ENCODE measurements at regions of chr6 and their contacts with region 1.

Region 1: DNA sequence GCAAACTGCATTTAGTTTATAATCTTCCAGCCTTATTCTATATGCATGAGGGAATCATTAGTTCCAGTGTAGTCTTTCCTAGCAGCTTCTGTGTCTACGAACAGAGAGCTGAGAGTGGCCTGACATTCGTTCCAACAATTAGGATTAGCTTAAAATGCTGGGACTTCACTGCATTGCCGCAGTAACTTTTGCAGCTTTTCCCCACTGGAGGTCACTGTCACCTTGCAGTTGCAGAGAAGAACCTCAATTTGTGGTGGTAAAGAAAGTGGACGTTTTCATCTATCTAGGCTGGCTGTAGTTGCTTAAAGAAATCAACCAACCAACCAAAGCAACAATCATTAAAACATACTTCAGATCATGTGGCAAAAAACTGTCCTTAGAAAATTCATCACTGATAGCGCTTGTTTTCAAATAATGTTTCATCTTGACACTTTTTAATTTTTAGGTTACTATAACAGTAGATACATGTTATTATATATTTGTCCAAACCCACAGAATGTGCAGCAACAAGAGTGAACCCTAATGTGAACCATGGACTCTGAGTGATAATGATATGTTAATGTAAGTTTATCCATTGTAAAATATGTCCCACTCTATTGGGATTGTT is 12.2 kb downstream of the MYLK4 start:
- DNase-seq: peak; percentile 58 to 73
- H3K4me3 ChIP-seq: no peak overlapping the region
- H3K4me3 Mint-ChIP-seq: no peak overlapping the region
- H3K27ac Mint-ChIP-seq: no peak overlapping the region
- H3K4me1 ChIP-seq: peaks cover 10% of the 10 kb centered on the region
- H3K4me1 Mint-ChIP-seq: peaks cover 3% of the 10 kb centered on the region
- H3K27me3 ChIP-seq: no peaks in the 10 kb centered on the region
- H3K27me3 Mint-ChIP-seq: no peaks in the 10 kb centered on the region
- CTCF ChIP-seq: peak; percentile 57 to 85

Region 2: GRCh38 chr6:2749969-2750600 is 11.6 kb after region 1 on chr6:
- CTCF ChIA-PET with region 1: interaction called, 21 read pairs
- POLR2A ChIA-PET with region 1: no interaction called
- intact Hi-C with region 1: loop called (anchors 1 kb)
- DNase-seq: peak; percentile 43 to 71
- H3K4me3 ChIP-seq: no peak overlapping the region
- H3K4me3 Mint-ChIP-seq: no peak overlapping the region
- H3K27ac Mint-ChIP-seq: no peak overlapping the region
- H3K4me1 ChIP-seq: peaks cover 4% of the 10 kb centered on the region
- H3K4me1 Mint-ChIP-seq: peaks cover under 1% of the 10 kb centered on the region
- H3K27me3 ChIP-seq: no peaks in the 10 kb centered on the region
- H3K27me3 Mint-ChIP-seq: no peaks in the 10 kb centered on the region
- CTCF ChIP-seq: peak; percentile 67 to 80

Region 3: GRCh38 chr6:2765166-2765895 is 26.9 kb after region 1 on chr6 and contains the start of gene WRNIP1:
- CTCF ChIA-PET with region 1: interaction called, 10 read pairs
- POLR2A ChIA-PET with region 1: interaction called, 4 read pairs
- intact Hi-C with region 1: loop called (anchors 2 kb)
- DNase-seq: peak; percentile 97 to 98
- H3K4me3 ChIP-seq: peak within 1 kb of the TSS; percentile 90
- H3K4me3 Mint-ChIP-seq: peak within 1 kb of the TSS; percentile 72
- H3K27ac Mint-ChIP-seq: peak within 1 kb of the TSS; percentile 94
- H3K4me1 ChIP-seq: no peaks in the 10 kb centered on the region; the same call in 1 of the 2 replicates
- H3K4me1 Mint-ChIP-seq: peaks cover 18% of the 10 kb centered on the region
- H3K27me3 ChIP-seq: no peaks in the 10 kb centered on the region
- H3K27me3 Mint-ChIP-seq: no peaks in the 10 kb centered on the region
- CTCF ChIP-seq: peak; percentile 32 to 59
- total RNA-seq, gene WRNIP1: 46.5 and 51.7 TPM in 2 replicates

Region 4: DNA sequence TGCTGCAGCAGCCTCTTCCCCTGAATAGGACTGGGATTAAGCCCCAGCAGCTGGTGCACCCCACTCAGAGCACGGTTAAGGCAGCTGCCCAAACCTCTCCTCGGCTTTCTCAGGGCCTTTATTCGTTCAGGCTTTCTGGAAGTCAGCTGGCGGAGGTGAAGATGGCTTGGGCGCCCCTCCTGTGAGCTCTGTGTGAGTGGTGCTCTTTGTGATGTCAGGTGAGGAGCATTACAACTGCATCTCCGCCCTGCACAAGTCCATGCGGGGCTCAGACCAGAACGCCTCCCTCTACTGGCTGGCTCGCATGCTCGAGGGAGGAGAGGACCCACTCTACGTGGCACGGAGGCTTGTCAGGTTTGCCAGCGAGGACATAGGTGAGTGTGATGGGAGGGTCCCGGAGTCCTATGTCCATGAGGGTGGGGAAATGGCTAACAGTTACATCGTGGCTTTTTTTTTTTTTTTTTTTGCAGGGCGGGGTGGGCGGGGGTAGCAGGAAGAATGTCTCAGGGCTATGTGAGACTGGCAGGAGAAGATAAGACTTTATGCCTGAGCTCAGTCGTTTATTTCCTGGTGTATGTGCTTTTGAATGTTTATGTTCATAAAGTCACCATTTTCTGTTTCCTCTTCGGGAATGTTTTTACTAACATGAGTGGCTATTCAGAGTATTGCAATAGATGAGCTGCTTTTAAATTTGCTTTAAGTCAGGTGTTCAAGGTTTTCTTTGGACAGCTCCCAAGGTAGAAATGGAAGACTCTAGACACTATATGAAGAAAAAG is 44.9 kb after region 1 on chr6:
- CTCF ChIA-PET with region 1: interaction called, 4 read pairs
- POLR2A ChIA-PET with region 1: no interaction called
- intact Hi-C with region 1: loop called (anchors 1 kb)
- DNase-seq: peak in 1 of 2 experiments; percentile 23
- H3K4me3 ChIP-seq: no peak overlapping the region
- H3K4me3 Mint-ChIP-seq: no peak overlapping the region
- H3K27ac Mint-ChIP-seq: no peak overlapping the region
- H3K4me1 ChIP-seq: no peaks in the 10 kb centered on the region
- H3K4me1 Mint-ChIP-seq: no peaks in the 10 kb centered on the region
- H3K27me3 ChIP-seq: no peaks in the 10 kb centered on the region
- H3K27me3 Mint-ChIP-seq: no peaks in the 10 kb centered on the region
- CTCF ChIP-seq: peak in 1 of 2 experiments; percentile 28

Measured in Caco-2 (cell line).